Sciatic nerve (tissue), 2 donors: ENCODE measurements at regions of chr1 and their contacts with region 1.

Region 1: GRCh38 chr1:983799-984473 is 2.0 kb upstream of the PERM1 start:
- DNase-seq: no peak
- ATAC-seq: peak; percentile 60

Region 2: GRCh38 chr1:866095-866494 is 117.8 kb before region 1 on chr1:
- intact Hi-C with region 1: no loop called
- DNase-seq: no peak
- ATAC-seq: no peak

Region 3: DNA sequence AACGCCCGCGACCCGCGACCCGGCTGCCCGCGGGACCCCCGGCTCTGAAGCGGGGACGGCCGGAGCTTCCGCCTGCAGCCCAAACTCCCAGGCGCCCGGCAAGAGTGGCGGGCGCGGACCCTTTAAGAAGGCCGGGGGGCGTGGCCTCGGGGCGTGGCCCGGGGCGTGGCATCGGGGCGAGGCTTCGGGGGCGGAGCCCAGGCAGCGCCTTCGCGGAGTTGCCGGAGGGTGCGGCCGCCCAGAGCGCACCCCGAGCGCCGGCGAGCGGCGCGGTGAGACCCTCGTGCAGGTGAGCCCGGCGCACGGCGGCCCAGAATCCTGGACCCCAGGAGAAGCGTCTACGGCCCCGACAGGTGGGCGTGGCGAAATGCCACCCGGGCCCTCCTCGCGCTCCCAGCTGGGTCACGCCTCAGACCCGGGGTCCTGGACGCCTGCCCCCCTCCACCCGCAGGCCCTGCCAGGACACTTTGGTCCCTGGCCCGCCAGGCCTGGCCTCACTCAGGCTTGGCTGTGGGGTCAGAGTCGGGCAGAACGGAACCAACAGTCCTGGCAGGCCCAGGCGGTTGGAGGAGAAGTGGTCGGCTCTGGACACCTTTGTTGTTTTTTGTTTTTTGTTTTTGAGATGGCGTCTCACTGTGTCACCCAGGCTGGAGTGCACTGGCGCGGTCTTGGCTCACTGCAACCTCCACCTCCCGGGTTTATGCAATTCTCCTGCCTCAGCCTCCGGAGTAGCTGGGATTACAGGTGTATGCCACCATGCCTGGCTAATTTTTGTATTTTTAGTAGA is 75.8 kb after region 1 on chr1:
- intact Hi-C with region 1: loop called (anchors 5 kb)
- DNase-seq: peak; percentile 90
- ATAC-seq: peak; percentile 79